Activated CD4-positive, alpha-beta T cell treated with anti-CD3 and anti-CD28 coated beads, Interleukin-2, amount 10 ng/mL, durations not matched to agents 24 days and 14 days (primary cell): ENCODE measurements at regions of chr6 and their contacts with region 1.

Region 1: GRCh38 chr6:134247231-134247833 is 70.6 kb downstream of the SGK1 start:
- DNase-seq: peak; percentile 94
- H3K4me3 Mint-ChIP-seq: peak overlapping the region; percentile 54
- H3K27ac Mint-ChIP-seq: peak overlapping the region; percentile 93
- H3K4me1 Mint-ChIP-seq: peaks cover 48% of the 10 kb centered on the region
- H3K27me3 Mint-ChIP-seq: no peaks in the 10 kb centered on the region

Region 2: GRCh38 chr6:134235937-134236751 is 11.2 kb before region 1 on chr6:
- intact Hi-C with region 1: loop called (anchors 1 kb)
- DNase-seq: peak; percentile 69
- H3K4me3 Mint-ChIP-seq: peak overlapping the region; percentile 51
- H3K27ac Mint-ChIP-seq: peak overlapping the region; percentile 88
- H3K4me1 Mint-ChIP-seq: peaks cover 40% of the 10 kb centered on the region
- H3K27me3 Mint-ChIP-seq: no peaks in the 10 kb centered on the region

Region 3: GRCh38 chr6:134272374-134272773 is 25.0 kb after region 1 on chr6:
- intact Hi-C with region 1: loop called (anchors 1 kb)
- DNase-seq: peak; percentile 67
- H3K4me3 Mint-ChIP-seq: peak overlapping the region; percentile 34
- H3K27ac Mint-ChIP-seq: peak overlapping the region; percentile 8
- H3K4me1 Mint-ChIP-seq: peaks cover 27% of the 10 kb centered on the region
- H3K27me3 Mint-ChIP-seq: no peaks in the 10 kb centered on the region

Region 4: DNA sequence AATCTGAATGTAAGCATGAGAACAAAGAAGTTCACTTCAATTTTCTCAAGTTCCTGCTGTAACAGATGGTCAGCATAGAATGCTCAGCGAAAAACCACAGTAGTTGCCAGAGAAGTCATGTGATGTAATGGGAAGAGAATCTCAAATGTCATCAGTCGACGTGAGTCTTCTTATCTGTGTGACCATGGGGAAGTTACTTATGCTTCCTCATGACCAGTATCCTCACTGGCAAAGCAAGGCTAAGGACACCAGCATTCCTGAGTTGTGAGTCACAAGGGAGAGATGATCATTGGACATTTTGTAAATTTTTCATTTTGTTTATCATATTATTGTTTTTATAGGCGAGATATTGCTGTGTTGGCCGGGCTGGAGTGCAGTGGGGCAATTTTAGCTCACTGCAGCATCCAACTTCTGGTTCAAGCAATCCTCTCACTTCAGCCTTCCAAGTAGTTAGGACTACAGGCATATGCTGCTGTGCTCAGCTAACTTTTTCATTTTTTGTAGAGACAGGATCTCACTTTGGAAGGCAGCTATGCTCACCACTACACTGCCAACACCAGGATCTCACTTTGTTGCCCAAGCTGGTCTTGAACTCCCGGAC is 48.7 kb after region 1 on chr6:
- intact Hi-C with region 1: no loop called
- DNase-seq: no peak
- H3K4me3 Mint-ChIP-seq: no peak overlapping the region
- H3K27ac Mint-ChIP-seq: no peak overlapping the region
- H3K4me1 Mint-ChIP-seq: peaks cover 4% of the 10 kb centered on the region
- H3K27me3 Mint-ChIP-seq: no peaks in the 10 kb centered on the region

Region 5: GRCh38 chr6:134379086-134379485 is 131.8 kb after region 1 on chr6:
- intact Hi-C with region 1: loop called (anchors 1 kb)
- DNase-seq: peak; percentile 83
- H3K4me3 Mint-ChIP-seq: peak overlapping the region; percentile 67
- H3K27ac Mint-ChIP-seq: peak overlapping the region; percentile 89
- H3K4me1 Mint-ChIP-seq: peaks cover 36% of the 10 kb centered on the region
- H3K27me3 Mint-ChIP-seq: no peaks in the 10 kb centered on the region